ENCODE measurements at regions of chr1 and their contacts with region 1.

Region 1: GRCh38 chr1:214590696-214591095 is 12.3 kb upstream of the CENPF start:
- DNase-seq: no peak
- H3K4me3 ChIP-seq: no peak overlapping the region
- H3K27ac ChIP-seq: no peak overlapping the region
- H3K4me1 ChIP-seq: no peaks in the 10 kb centered on the region
- H3K27me3 ChIP-seq: no peaks in the 10 kb centered on the region
- CTCF ChIP-seq: no peak
- POLR2A ChIP-seq: no peak

Region 2: DNA sequence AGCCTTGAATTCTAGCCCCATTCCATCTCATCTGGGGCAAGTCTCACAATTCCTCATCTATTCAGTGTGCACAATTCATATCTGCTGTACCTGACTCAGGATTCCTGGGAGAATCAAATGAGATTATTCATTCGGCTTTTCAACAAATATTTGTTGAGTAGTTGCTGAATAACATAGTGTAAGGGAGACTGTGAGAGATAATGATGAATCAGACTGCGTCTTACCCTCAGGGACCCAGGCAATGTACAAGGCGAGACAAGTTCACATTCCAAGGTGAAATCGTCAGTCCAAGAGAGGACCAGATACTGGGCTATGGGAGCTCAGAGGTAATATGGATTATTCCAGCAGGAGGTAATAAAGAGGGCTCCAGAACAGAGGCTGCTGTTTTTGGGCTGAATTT is 377.6 kb before region 1 on chr1:
- intact Hi-C with region 1: loop called in 1 of 2 experiments (anchors 10 kb)
- DNase-seq: no peak
- H3K4me3 ChIP-seq: no peak overlapping the region
- H3K27ac ChIP-seq: no peak overlapping the region
- H3K4me1 ChIP-seq: peaks cover 0 to 8% of the 10 kb centered on the region in 2 donors
- H3K27me3 ChIP-seq: no peaks in the 10 kb centered on the region
- CTCF ChIP-seq: no peak
- POLR2A ChIP-seq: no peak

Region 3: DNA sequence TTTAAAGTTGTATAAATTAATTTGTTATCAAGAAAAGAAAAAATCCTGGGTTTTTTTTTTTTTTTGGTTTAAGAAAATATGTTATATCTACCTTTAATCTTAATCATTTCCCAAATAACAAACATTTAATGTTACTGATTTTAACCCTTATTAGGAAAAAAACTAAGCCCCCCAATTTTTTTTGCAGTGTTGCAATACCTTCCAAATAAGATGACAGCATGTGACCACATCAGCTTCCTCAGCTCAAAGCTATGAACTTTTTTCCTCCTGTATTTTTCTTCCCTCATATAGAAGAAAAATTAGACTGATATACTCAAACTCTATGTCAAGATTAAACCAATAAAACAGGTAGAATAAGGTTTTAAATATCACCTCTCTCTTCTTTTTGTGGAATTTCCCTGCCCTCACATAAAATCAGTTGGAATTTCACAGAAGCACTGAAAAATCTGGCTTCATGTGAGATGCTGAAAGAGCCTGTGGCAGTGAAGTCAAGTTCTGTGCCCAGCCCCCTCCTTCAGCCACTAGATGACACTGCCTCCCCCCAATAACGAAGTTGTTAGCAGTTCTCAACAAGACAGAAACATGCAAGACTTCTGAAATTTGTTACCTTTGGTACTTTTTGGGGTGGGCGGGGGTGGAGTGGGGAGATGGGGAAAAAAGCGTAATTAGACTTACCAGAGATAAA is 319.4 kb before region 1 on chr1:
- intact Hi-C with region 1: no loop called
- DNase-seq: no peak
- H3K4me3 ChIP-seq: no peak overlapping the region
- H3K27ac ChIP-seq: no peak overlapping the region
- H3K4me1 ChIP-seq: no peaks in the 10 kb centered on the region
- H3K27me3 ChIP-seq: peaks cover 46% of the 10 kb centered on the region
- CTCF ChIP-seq: no peak
- POLR2A ChIP-seq: no peak

Region 4: DNA sequence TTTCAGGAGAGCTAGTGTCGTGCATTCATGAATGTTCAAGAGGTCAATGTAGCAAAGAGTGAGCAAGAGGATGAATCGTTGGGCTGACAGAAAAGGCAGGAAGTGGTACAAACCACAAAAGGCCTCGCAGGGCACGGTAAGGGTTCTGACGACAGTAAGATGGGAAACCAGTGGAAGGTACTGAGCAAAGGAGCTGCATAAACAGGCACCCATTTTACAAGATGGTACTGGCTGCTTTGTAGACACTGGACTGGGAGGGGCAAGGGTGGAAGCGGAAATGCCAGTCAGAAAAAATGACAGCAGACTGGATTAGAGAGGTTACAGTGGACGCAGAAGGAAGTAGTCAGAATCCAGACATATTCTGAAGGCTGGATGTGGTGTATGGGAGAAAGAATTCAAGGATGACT is 162.8 kb before region 1 on chr1:
- intact Hi-C with region 1: no loop called
- DNase-seq: no peak
- H3K4me3 ChIP-seq: no peak overlapping the region
- H3K27ac ChIP-seq: peak overlapping the region in 2 of 5 donors; percentile 17 to 29
- H3K4me1 ChIP-seq: peaks cover 0 to 29% of the 10 kb centered on the region in 2 donors
- H3K27me3 ChIP-seq: no peaks in the 10 kb centered on the region
- CTCF ChIP-seq: no peak
- POLR2A ChIP-seq: no peak

Region 5: DNA sequence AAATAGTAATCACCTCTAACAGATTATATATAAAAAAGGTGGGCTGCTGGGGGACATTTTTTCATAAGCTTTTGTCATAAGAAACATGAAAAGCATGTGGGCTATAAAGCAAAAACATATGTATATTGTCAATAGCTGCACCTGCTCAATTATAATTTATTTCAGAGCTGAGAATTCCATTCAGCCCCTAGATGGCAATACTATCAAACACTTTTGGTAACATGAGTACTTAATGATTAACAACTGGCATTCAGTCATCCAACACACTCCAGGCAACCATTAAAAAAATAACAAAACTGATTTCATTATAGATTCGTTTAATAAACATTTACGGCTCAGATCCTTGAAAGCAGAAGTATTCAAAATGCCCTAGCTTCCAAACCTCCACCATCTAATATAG is 1091.5 kb after region 1 on chr1:
- intact Hi-C with region 1: no loop called
- DNase-seq: no peak
- H3K4me3 ChIP-seq: no peak overlapping the region
- H3K27ac ChIP-seq: no peak overlapping the region
- H3K4me1 ChIP-seq: no peaks in the 10 kb centered on the region
- H3K27me3 ChIP-seq: no peaks in the 10 kb centered on the region
- CTCF ChIP-seq: no peak
- POLR2A ChIP-seq: no peak

Measured in adrenal gland (tissue), 19 donors.